ENCODE measurements at regions of chr3 and their contacts with region 1.

Region 1: GRCh38 chr3:53709860-53710674 is 136.2 kb downstream of the CHDH start:
- DNase-seq: peak; percentile 69 to 77 (median 73)
- ATAC-seq: peak; percentile 86
- H3K4me3 ChIP-seq: no peak overlapping the region
- H3K27ac ChIP-seq: no peak overlapping the region
- H3K4me1 ChIP-seq: peaks cover 23% of the 10 kb centered on the region
- H3K27me3 ChIP-seq: no peaks in the 10 kb centered on the region
- CTCF ChIP-seq: peak; percentile 57 to 82 (median 80)
- POLR2A ChIP-seq: no peak

Region 2: GRCh38 chr3:53293867-53294266 is 416.2 kb before region 1 on chr3:
- intact Hi-C with region 1: loop called (anchors 10 kb)
- DNase-seq: no peak
- ATAC-seq: no peak
- H3K4me3 ChIP-seq: no peak overlapping the region
- H3K27ac ChIP-seq: no peak overlapping the region
- H3K4me1 ChIP-seq: no peaks in the 10 kb centered on the region
- H3K27me3 ChIP-seq: no peaks in the 10 kb centered on the region
- CTCF ChIP-seq: no peak
- POLR2A ChIP-seq: no peak

Region 3: DNA sequence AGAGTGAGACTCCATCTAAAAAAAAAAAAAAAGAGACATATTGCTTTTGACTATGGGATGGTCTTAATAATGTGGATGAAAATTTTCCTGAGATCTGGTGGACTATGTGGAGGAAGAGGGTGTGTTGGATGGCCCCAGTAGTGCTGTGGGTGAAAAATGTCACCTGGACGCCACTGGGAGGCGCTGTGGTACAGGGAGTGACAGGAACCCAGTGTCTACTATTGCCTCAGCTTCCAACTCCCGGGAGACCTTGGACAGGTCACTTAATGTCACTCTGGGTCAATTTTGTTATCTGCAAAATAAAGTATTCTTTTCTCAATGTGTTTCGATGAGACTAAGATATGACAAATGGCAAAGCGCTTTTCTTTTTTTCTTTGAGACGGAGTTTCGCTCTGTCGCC is 335.0 kb before region 1 on chr3:
- intact Hi-C with region 1: loop called (anchors 10 kb)
- DNase-seq: peak; percentile 67 to 72 (median 70)
- ATAC-seq: peak; percentile 79
- H3K4me3 ChIP-seq: no peak overlapping the region
- H3K27ac ChIP-seq: no peak overlapping the region
- H3K4me1 ChIP-seq: no peaks in the 10 kb centered on the region
- H3K27me3 ChIP-seq: no peaks in the 10 kb centered on the region
- CTCF ChIP-seq: peak; percentile 44 to 86 (median 74)
- POLR2A ChIP-seq: no peak